MCF 10A (cell line): ENCODE measurements at regions of chr9 and their contacts with region 1.

Region 1: DNA sequence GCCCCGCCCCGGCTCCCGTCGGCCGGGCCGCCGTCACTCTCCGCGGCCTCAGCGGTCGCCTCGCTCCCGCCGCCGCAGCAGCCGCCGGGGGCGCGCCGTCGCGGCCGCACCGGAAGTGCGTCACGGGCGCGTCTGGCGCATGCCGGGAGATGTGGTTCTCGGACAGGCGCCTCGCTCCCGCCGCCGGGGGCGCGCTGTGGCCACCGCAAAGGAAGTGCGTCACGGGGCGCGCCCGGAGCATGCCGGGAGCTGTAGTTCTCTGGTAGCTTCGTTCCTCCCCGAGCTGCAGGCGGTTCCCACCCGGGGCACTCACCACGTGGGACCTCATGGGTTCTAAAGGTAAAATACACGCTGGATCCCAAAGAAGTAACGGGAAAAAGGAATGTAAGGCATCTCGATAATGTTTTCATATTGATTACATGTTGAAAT is at the start of gene UBAC1:
- DNase-seq: peak; percentile 91
- H3K4me3 Mint-ChIP-seq: peak within 1 kb of the TSS; percentile 85
- H3K27ac Mint-ChIP-seq: peak within 1 kb of the TSS; percentile 80
- H3K4me1 Mint-ChIP-seq: peaks cover 23% of the 10 kb centered on the region
- H3K27me3 Mint-ChIP-seq: no peaks in the 10 kb centered on the region
- CTCF ChIP-seq: peak; percentile 14
- total RNA-seq, gene UBAC1: 32.5 and 34.7 TPM in 2 replicates

Region 2: GRCh38 chr9:135602789-135603481 is 358.4 kb before region 1 on chr9:
- CTCF ChIA-PET with region 1: interaction called, 5 read pairs
- POLR2A ChIA-PET with region 1: interaction called, 3 read pairs
- intact Hi-C with region 1: loop called (anchors 5 kb)
- DNase-seq: peak; percentile 51
- H3K4me3 Mint-ChIP-seq: no peak overlapping the region
- H3K27ac Mint-ChIP-seq: no peak overlapping the region
- H3K4me1 Mint-ChIP-seq: no peaks in the 10 kb centered on the region
- H3K27me3 Mint-ChIP-seq: peaks cover 39% of the 10 kb centered on the region
- CTCF ChIP-seq: peak; percentile 72

Region 3: DNA sequence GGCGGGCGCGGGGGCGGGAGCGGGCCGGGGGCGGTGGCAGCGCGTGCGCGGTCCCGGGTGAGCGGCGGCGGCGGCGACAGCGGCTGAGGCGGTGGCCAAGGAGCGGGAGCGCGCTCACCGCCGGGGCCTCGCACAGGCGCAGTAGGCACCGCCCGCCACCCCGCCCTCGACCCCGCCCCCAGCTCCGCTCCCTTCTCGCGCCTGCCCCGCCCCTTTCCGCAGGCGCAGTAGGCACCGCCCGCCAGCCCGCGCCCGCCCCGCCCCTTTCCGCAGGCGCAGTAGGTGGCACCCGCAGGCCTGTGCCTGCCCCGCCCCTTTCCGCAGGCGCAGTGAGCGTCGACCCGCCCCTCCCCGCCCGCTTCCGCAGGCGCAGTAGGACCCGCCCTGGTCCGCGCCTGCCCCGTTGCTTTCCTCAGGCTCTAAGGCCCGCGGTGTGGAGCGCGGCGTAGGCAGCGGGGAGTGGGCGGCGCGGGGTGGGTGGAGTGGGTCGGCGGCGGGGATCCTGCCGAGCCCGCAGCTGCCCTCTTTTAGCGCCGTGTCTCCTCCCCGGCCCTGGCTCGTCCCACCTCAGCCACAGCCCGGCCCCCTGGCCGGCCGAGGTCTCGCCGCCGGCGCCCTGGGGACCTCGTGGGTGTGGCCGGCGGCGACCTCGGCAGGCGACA is 53.7 kb before region 1 on chr9 and contains the start of gene CAMSAP1:
- CTCF ChIA-PET with region 1: no interaction called
- POLR2A ChIA-PET with region 1: interaction called, 15 read pairs
- intact Hi-C with region 1: loop called (anchors 2 kb)
- DNase-seq: peak; percentile 92
- H3K4me3 Mint-ChIP-seq: peak within 1 kb of the TSS; percentile 83
- H3K27ac Mint-ChIP-seq: peak within 1 kb of the TSS; percentile 67
- H3K4me1 Mint-ChIP-seq: peaks cover 39% of the 10 kb centered on the region
- H3K27me3 Mint-ChIP-seq: no peaks in the 10 kb centered on the region
- CTCF ChIP-seq: no peak
- total RNA-seq, gene CAMSAP1: 31.0 and 39.5 TPM in 2 replicates

Region 4: GRCh38 chr9:135978642-135979546 is 17.6 kb after region 1 on chr9:
- CTCF ChIA-PET with region 1: no interaction called
- POLR2A ChIA-PET with region 1: no interaction called
- intact Hi-C with region 1: no loop called
- DNase-seq: no peak
- H3K4me3 Mint-ChIP-seq: no peak overlapping the region
- H3K27ac Mint-ChIP-seq: no peak overlapping the region
- H3K4me1 Mint-ChIP-seq: no peaks in the 10 kb centered on the region
- H3K27me3 Mint-ChIP-seq: peaks cover 26% of the 10 kb centered on the region
- CTCF ChIP-seq: no peak

Region 5: DNA sequence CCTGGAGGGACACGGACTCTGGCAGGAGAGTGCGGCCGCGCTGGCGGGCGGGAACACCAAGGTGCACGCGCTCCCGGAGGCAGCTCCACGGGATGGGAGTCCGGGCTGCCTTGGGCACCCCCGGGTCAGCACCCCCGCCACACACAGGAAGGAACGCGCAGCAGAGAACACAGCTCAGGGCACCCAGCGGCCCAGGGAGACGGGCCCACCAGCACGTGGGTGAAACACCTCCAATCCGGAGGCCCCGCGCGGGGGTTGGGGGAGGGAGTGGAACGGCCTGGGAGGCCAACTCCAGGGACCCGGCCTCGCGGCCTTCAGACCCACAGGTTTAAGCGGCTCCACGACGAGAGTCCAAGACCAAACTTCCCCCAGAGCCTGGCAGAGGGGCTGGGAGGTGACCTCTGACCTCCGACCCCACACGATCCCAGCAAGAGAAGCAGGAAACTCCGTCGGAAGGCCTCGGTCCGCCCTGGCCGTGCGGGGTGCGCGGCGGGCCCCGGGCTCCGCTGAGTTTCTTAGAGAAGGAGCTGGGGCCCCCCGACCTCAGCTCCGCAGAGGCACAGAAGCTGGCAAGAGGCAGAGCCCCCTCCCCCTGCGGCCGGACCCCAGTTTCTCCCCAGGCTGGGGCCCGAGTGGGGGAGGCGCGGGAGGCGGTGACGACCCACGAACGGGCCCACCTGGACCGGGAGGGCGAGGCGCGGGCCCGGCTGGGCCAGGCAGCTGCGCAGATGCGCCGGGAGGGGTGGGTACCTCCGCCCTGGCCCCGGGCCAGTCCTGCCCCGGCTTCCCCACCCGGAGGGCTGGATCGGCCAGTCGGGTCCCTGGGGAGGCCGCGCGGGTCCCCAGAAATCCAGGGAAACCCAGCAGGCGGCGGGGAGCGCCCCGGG is 132.9 kb after region 1 on chr9:
- CTCF ChIA-PET with region 1: no interaction called
- POLR2A ChIA-PET with region 1: interaction called, 13 read pairs
- intact Hi-C with region 1: no loop called
- DNase-seq: peak; percentile 65
- H3K4me3 Mint-ChIP-seq: peak overlapping the region; percentile 77
- H3K27ac Mint-ChIP-seq: peak overlapping the region; percentile 67
- H3K4me1 Mint-ChIP-seq: peaks cover 17% of the 10 kb centered on the region
- H3K27me3 Mint-ChIP-seq: no peaks in the 10 kb centered on the region
- CTCF ChIP-seq: no peak

Region 6: GRCh38 chr9:136225748-136226679 is 264.7 kb after region 1 on chr9:
- CTCF ChIA-PET with region 1: no interaction called
- POLR2A ChIA-PET with region 1: no interaction called
- intact Hi-C with region 1: loop called (anchors 2 kb)
- DNase-seq: peak; percentile 65
- H3K4me3 Mint-ChIP-seq: no peak overlapping the region
- H3K27ac Mint-ChIP-seq: no peak overlapping the region
- H3K4me1 Mint-ChIP-seq: peaks cover 14% of the 10 kb centered on the region
- H3K27me3 Mint-ChIP-seq: no peaks in the 10 kb centered on the region
- CTCF ChIP-seq: peak; percentile 85